A549 (cell line): ENCODE measurements at regions of chr17 and their contacts with region 1.

Region 1: GRCh38 chr17:76681222-76682137 is 29.3 kb downstream of the MXRA7 start:
- DNase-seq: peak; percentile 77 to 84
- ATAC-seq: peak; percentile 75 to 90; a peak in 5 of 6 replicates
- H3K4me3 ChIP-seq: no peak overlapping the region
- H3K27ac ChIP-seq: no peak overlapping the region
- H3K4me1 ChIP-seq: no peaks in the 10 kb centered on the region
- CTCF ChIP-seq: peak; percentile 83
- EP300 ChIP-seq: no peak
- POLR2A ChIP-seq: no peak
- RAD21 ChIP-seq: peak; percentile 82 to 84

Region 2: DNA sequence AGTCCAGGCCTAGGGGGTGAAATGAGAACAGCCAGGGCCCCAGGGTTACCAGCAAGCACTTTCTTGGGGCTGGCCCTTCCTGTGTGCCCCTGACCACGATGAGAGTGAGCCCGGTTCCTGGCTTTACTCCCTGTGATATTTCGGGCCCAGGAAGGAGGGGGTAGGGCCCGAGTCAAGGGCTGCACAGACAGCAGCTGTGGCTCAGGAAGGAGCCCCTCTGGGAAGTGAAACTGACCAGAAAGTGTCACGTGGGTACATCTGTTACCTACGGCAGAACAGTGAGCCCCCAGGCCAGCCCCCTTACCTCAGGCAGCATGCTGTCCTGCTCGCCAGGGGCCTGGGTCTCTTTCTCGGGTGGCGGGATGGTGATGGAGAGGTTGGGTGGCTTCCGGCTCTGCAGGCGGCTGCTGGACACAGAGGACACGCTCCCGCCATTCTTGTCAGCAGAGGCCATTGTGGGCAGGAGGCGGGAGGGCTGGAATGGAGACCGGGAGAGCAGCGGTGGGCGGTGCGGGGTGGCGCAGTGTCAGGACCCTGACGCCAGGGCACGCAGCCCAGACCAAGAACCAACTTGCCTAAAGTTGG is 200.3 kb before region 1 on chr17:
- CTCF ChIA-PET with region 1: no interaction called
- POLR2A ChIA-PET with region 1: no interaction called
- DNase-seq: no peak
- ATAC-seq: no peak
- H3K4me3 ChIP-seq: no peak overlapping the region
- H3K27ac ChIP-seq: 0 out of 6 replicates have a peak overlapping the region, but pooled peaks of 1 of the 2 experiments have one; percentile 17
- H3K4me1 ChIP-seq: peaks cover 22% of the 10 kb centered on the region
- CTCF ChIP-seq: no peak
- EP300 ChIP-seq: no peak
- POLR2A ChIP-seq: no peak
- RAD21 ChIP-seq: no peak

Region 3: GRCh38 chr17:76547184-76547641 is 134.3 kb before region 1 on chr17:
- CTCF ChIA-PET with region 1: interaction called, 13 read pairs
- POLR2A ChIA-PET with region 1: no interaction called
- DNase-seq: peak; percentile 72 to 74
- ATAC-seq: peak; percentile 66 to 89
- H3K4me3 ChIP-seq: no peak overlapping the region
- H3K27ac ChIP-seq: peak overlapping the region in 1 of 2 experiments; percentile 49; a peak in 4 of 6 replicates
- H3K4me1 ChIP-seq: peaks cover 36% of the 10 kb centered on the region
- CTCF ChIP-seq: peak; percentile 80
- EP300 ChIP-seq: no peak
- POLR2A ChIP-seq: no peak
- RAD21 ChIP-seq: peak; percentile 86 to 95

Region 4: GRCh38 chr17:76585818-76586593 is 95.5 kb before region 1 on chr17 and contains the start of gene ST6GALNAC2:
- CTCF ChIA-PET with region 1: interaction called, 16 read pairs
- POLR2A ChIA-PET with region 1: no interaction called
- DNase-seq: peak; percentile 59 to 70
- ATAC-seq: peak; percentile 84 to 92
- H3K4me3 ChIP-seq: peak within 1 kb of the TSS; percentile 64
- H3K27ac ChIP-seq: peak within 1 kb of the TSS; percentile 76 to 89
- H3K4me1 ChIP-seq: 0 out of 3 replicates have a peak, but pooled peaks cover 3% of the 10 kb centered on the region
- CTCF ChIP-seq: peak; percentile 25; the same call in 2 of the 3 replicates
- EP300 ChIP-seq: no peak
- POLR2A ChIP-seq: no peak
- RAD21 ChIP-seq: peak; percentile 33 to 59; a peak in 4 of 5 replicates
- polyA plus RNA-seq, gene ST6GALNAC2: 0.74 and 0.78 TPM in 2 replicates

Region 5: GRCh38 chr17:76700617-76701470 is 19.4 kb after region 1 on chr17:
- CTCF ChIA-PET with region 1: interaction called, 456 read pairs
- POLR2A ChIA-PET with region 1: no interaction called
- DNase-seq: no peak
- ATAC-seq: peak; percentile 14; a peak in 3 of 6 replicates
- H3K4me3 ChIP-seq: no peak overlapping the region
- H3K27ac ChIP-seq: no peak overlapping the region
- H3K4me1 ChIP-seq: no peaks in the 10 kb centered on the region
- CTCF ChIP-seq: no peak
- EP300 ChIP-seq: no peak
- POLR2A ChIP-seq: no peak
- RAD21 ChIP-seq: no peak